Thyroid gland (tissue), 4 donors: ENCODE measurements at regions of chr3 and their contacts with region 1.

Region 1: GRCh38 chr3:105518806-105519418 is 152.2 kb downstream of the ALCAM start:
- DNase-seq: peak in 1 of 2 donors; percentile 10
- H3K4me3 ChIP-seq: no peak overlapping the region
- H3K27ac ChIP-seq: no peak overlapping the region
- H3K4me1 ChIP-seq: no peaks in the 10 kb centered on the region
- H3K27me3 ChIP-seq: no peaks in the 10 kb centered on the region
- CTCF ChIP-seq: peak in 5 of 6 experiments; percentile 44 to 75 (median 66)
- POLR2A ChIP-seq: no peak

Region 2: GRCh38 chr3:105366326-105367062 is 152.4 kb before region 1 on chr3 and contains the start of gene ALCAM:
- intact Hi-C with region 1: loop called (anchors 10 kb)
- DNase-seq: peak; percentile 97 to 98
- H3K4me3 ChIP-seq: peak within 1 kb of the TSS; percentile 41 to 81 (median 56)
- H3K27ac ChIP-seq: peak within 1 kb of the TSS; percentile 90 to 95 (median 92)
- H3K4me1 ChIP-seq: peaks cover 0 to 5% of the 10 kb centered on the region in 2 donors
- H3K27me3 ChIP-seq: no peaks in the 10 kb centered on the region
- CTCF ChIP-seq: peak in 4 of 6 experiments; percentile 45 to 92 (median 69)
- POLR2A ChIP-seq: peak; percentile 93 to 98
- total RNA-seq, gene ALCAM: 86.5 to 129 (median 108) TPM

Region 3: GRCh38 chr3:105656651-105657504 is 138.0 kb after region 1 on chr3:
- intact Hi-C with region 1: no loop called
- DNase-seq: no peak
- H3K4me3 ChIP-seq: no peak overlapping the region
- H3K27ac ChIP-seq: no peak overlapping the region
- H3K4me1 ChIP-seq: no peaks in the 10 kb centered on the region
- H3K27me3 ChIP-seq: no peaks in the 10 kb centered on the region
- CTCF ChIP-seq: no peak
- POLR2A ChIP-seq: no peak

Region 4: GRCh38 chr3:105836533-105836932 is 317.6 kb after region 1 on chr3:
- intact Hi-C with region 1: no loop called
- DNase-seq: no peak
- H3K4me3 ChIP-seq: no peak overlapping the region
- H3K27ac ChIP-seq: no peak overlapping the region
- H3K4me1 ChIP-seq: peaks cover 11 to 14% of the 10 kb centered on the region in 2 donors
- H3K27me3 ChIP-seq: no peaks in the 10 kb centered on the region
- CTCF ChIP-seq: no peak
- POLR2A ChIP-seq: no peak